ENCODE measurements at regions of chr10 and their contacts with region 1.

Region 1: GRCh38 chr10:126041781-126042231 is 145.4 kb downstream of the FANK1 start:
- DNase-seq: peak; percentile 95
- ATAC-seq: peak; percentile 98
- H3K4me3 ChIP-seq: no peak overlapping the region
- H3K27ac ChIP-seq: no peak overlapping the region
- H3K4me1 ChIP-seq: peaks cover 13% of the 10 kb centered on the region
- H3K27me3 ChIP-seq: no peaks in the 10 kb centered on the region
- CTCF ChIP-seq: no peak
- EP300 ChIP-seq: peak; percentile 72 to 93
- POLR2A ChIP-seq: peak; percentile 62
- RAD21 ChIP-seq: no peak

Region 2: GRCh38 chr10:125707541-125708468 is 334.0 kb before region 1 on chr10:
- CTCF ChIA-PET with region 1: no interaction called
- POLR2A ChIA-PET with region 1: no interaction called
- RAD21 ChIA-PET with region 1: no interaction called
- SMC1A ChIA-PET with region 1: no interaction called
- in situ Hi-C with region 1: loop called (anchors 10 kb)
- intact Hi-C with region 1: no loop called
- DNase-seq: no peak
- ATAC-seq: peak; percentile 66
- H3K4me3 ChIP-seq: no peak overlapping the region
- H3K27ac ChIP-seq: no peak overlapping the region
- H3K4me1 ChIP-seq: no peaks in the 10 kb centered on the region
- H3K27me3 ChIP-seq: no peaks in the 10 kb centered on the region
- CTCF ChIP-seq: no peak
- EP300 ChIP-seq: no peak
- POLR2A ChIP-seq: no peak
- RAD21 ChIP-seq: no peak